Endothelial cell of umbilical vein (primary cell): ENCODE measurements at regions of chr1 and their contacts with region 1.

Region 1: GRCh38 chr1:113978863-113979702 is at the start of gene OLFML3:
- DNase-seq: peak; percentile 86
- H3K4me3 ChIP-seq: no peak within 1 kb of the TSS
- H3K27ac ChIP-seq: peak within 1 kb of the TSS; percentile 44
- H3K4me1 ChIP-seq: peaks cover 46% of the 10 kb centered on the region
- H3K27me3 ChIP-seq: no peaks in the 10 kb centered on the region
- CTCF ChIP-seq: peak; percentile 60 to 64
- POLR2A ChIP-seq: no peak
- total RNA-seq, gene OLFML3: 1.7 and 3.4 TPM in 2 replicates

Region 2: GRCh38 chr1:113835642-113836307 is 143.3 kb before region 1 on chr1:
- CTCF ChIA-PET with region 1: interaction called, 8 read pairs
- POLR2A ChIA-PET with region 1: no interaction called
- dilution Hi-C with region 1: no loop called
- intact Hi-C with region 1: loop called (anchors 5 kb)
- DNase-seq: peak; percentile 72
- H3K4me3 ChIP-seq: no peak overlapping the region
- H3K27ac ChIP-seq: no peak overlapping the region
- H3K4me1 ChIP-seq: no peaks in the 10 kb centered on the region
- H3K27me3 ChIP-seq: no peaks in the 10 kb centered on the region
- CTCF ChIP-seq: peak; percentile 11 to 12
- POLR2A ChIP-seq: no peak

Region 3: GRCh38 chr1:113928941-113929749 is 49.9 kb before region 1 on chr1 and contains the start of gene HIPK1:
- CTCF ChIA-PET with region 1: interaction called, 5 read pairs
- POLR2A ChIA-PET with region 1: no interaction called
- dilution Hi-C with region 1: no loop called
- intact Hi-C with region 1: loop called (anchors 2 kb)
- DNase-seq: peak; percentile 90
- H3K4me3 ChIP-seq: peak within 1 kb of the TSS; percentile 63 to 73 (median 65)
- H3K27ac ChIP-seq: peak within 1 kb of the TSS; percentile 89
- H3K4me1 ChIP-seq: peaks cover 26% of the 10 kb centered on the region
- H3K27me3 ChIP-seq: peaks cover 0 to under 1% of the 10 kb centered on the region in 2 experiments
- CTCF ChIP-seq: no peak
- POLR2A ChIP-seq: peak; percentile 91
- total RNA-seq, gene HIPK1: 50.2 and 56.1 TPM in 2 replicates

Region 4: DNA sequence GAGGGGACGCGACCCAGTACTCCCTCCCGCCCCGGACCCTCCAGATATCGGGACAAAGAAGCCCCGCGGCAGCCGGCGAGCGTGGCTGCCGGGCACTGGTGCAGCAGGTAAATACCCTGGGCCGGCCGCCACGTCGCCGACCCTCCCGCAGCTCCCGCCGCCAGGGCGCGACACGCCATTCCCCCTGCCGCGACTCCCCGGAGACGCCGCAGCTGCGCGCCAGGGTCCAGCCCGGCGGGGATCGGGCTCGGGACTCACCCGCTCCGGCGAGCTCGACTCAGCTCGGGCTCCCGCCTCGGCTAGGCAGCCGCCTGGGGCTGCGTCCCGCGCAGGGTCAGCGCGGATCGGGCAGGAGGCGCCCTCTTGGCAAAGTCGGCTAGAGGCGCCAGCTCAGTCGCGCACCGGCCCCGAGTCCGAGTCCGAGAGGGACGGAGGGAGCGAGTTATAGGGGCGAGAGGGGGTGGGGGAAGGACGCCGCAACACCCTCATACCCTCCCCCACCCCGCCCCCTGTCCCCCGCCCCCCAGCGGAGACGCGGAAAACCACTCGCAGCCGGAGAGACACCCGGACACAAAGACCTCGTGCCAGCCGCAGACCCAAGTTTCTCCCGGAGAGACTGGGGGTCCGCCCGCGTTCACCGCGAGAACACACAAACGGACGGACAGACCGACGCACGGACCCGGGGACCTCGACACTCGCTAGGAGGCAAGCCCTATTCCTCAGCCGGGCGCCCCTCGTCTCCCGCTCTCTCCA is 173.6 kb after region 1 on chr1:
- CTCF ChIA-PET with region 1: interaction called, 4 read pairs
- POLR2A ChIA-PET with region 1: no interaction called
- dilution Hi-C with region 1: no loop called
- intact Hi-C with region 1: loop called (anchors 10 kb)
- DNase-seq: peak; percentile 28
- H3K4me3 ChIP-seq: no peak overlapping the region
- H3K27ac ChIP-seq: no peak overlapping the region
- H3K4me1 ChIP-seq: no peaks in the 10 kb centered on the region
- H3K27me3 ChIP-seq: peaks cover 64 to 68% of the 10 kb centered on the region in 2 experiments
- CTCF ChIP-seq: no peak
- POLR2A ChIP-seq: no peak

Region 5: DNA sequence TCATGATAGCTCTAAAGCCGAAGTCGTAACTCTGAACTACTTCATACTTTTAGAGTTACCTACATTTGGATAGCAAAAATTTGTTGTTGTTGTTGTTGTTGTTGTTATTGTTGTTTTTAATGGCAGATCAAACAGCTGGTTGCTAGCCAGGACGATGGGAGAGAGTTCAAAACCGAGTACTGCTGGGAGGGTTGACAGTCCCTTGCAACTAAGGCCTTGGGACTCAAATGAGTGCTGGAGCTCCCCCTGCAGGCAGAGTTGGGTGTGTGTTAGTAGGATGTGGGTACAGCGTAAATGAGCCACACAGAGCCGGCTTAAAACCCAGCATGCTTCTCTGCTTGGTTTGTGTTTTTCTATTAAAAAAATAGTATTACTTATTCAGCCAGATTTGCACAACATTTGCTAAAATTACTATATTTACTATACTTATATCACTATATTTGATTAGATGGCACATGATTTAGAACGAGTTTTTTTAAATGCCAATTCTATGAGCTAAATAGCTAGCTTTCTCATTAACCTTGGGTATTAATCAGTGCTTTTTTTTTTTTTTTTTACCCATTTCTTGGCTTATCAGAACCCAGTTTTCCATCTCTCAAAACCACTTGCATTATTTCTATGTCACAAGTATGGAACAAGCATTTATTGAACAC is 303.8 kb after region 1 on chr1:
- CTCF ChIA-PET with region 1: interaction called, 271 read pairs
- POLR2A ChIA-PET with region 1: no interaction called
- dilution Hi-C with region 1: no loop called
- intact Hi-C with region 1: loop called (anchors 1 kb)
- DNase-seq: peak; percentile 74
- H3K4me3 ChIP-seq: no peak overlapping the region
- H3K27ac ChIP-seq: no peak overlapping the region
- H3K4me1 ChIP-seq: no peaks in the 10 kb centered on the region
- H3K27me3 ChIP-seq: peaks cover 2 to 6% of the 10 kb centered on the region in 2 experiments
- CTCF ChIP-seq: peak; percentile 77 to 90
- POLR2A ChIP-seq: no peak

Region 6: DNA sequence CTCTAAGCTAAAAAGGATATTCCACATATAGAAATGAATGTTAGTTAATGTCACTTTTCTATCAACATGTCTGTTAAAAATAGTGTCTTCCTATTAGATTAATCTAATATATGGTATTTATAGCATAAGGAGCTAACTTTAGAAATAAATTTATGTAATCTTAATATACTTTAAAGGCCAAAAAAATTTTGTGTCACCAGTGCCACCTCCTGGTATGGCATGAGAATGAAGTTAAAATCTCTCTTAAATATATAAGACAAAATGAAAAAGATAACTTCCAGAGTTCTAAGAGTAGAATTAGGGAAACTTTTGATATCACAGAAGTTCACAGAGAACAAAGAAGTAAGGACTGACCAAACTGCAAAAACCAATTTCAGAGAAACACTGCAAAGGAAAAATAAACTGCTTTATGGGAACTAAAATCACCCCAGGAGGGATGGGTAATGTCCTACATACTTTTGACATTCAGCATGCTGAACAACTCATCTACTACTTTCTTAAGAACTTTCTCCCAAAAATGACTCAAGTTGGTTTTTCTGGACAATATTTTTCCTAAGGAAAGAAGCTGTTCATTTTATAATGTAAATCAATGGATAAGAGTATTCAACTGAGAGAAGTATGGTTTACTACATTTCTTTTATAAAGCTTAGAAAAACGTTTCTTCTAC is 449.1 kb after region 1 on chr1:
- CTCF ChIA-PET with region 1: interaction called, 18 read pairs
- POLR2A ChIA-PET with region 1: no interaction called
- dilution Hi-C with region 1: no loop called
- intact Hi-C with region 1: loop called (anchors 2 kb)
- DNase-seq: peak; percentile 43
- H3K4me3 ChIP-seq: no peak overlapping the region
- H3K27ac ChIP-seq: no peak overlapping the region
- H3K4me1 ChIP-seq: no peaks in the 10 kb centered on the region
- H3K27me3 ChIP-seq: no peaks in the 10 kb centered on the region
- CTCF ChIP-seq: peak in 1 of 2 donors; percentile 11
- POLR2A ChIP-seq: no peak

Region 7: GRCh38 chr1:114670083-114671010 is 691.3 kb after region 1 on chr1:
- CTCF ChIA-PET with region 1: interaction called, 12 read pairs
- POLR2A ChIA-PET with region 1: no interaction called
- dilution Hi-C with region 1: no loop called
- intact Hi-C with region 1: loop called (anchors 1 kb)
- DNase-seq: peak; percentile 91
- H3K4me3 ChIP-seq: peak overlapping the region in 2 of 3 experiments; percentile 49 to 62
- H3K27ac ChIP-seq: no peak overlapping the region
- H3K4me1 ChIP-seq: peaks cover 11% of the 10 kb centered on the region
- H3K27me3 ChIP-seq: peaks cover 10 to 17% of the 10 kb centered on the region in 2 experiments
- CTCF ChIP-seq: no peak
- POLR2A ChIP-seq: no peak